ENCODE measurements at regions of chr20 and their contacts with region 1.

Region 1: DNA sequence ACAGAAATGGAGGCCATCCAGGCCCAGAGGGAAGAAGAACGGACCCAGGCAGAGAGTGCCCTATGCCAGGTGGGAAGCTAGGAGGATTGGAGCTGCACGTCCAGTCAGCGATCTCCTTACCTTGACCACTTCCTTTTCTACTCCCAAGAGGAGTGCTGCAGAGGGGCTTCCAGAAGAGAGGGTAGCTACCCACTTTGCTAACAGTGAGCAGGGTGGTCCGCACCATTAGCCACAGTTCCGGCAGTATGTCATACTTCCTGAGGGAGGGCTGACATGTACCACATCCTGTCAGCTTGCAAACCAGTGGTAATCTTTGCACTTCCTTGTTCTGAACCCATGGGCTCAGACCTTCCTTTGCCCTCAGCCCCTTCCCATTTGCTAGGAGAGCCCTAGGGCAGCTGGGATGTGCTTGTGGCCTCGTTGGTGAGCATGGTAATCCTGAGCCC is 35.4 kb downstream of the CEP250 start:
- DNase-seq: peak; percentile 70 to 84 (median 74)
- H3K4me3 ChIP-seq: peak overlapping the region; percentile 48 to 97
- H3K4me3 Mint-ChIP-seq: peak overlapping the region; percentile 95 to 99 (median 99)
- H3K27ac ChIP-seq: peak overlapping the region; percentile 87
- H3K27ac Mint-ChIP-seq: peak overlapping the region; percentile 94 to 100 (median 98)
- H3K4me1 ChIP-seq: peaks cover 55% of the 10 kb centered on the region
- H3K4me1 Mint-ChIP-seq: peaks cover 38 to 81% (median 56%) of the 10 kb centered on the region in 4 donors
- H3K27me3 ChIP-seq: no peaks in the 10 kb centered on the region
- H3K27me3 Mint-ChIP-seq: no peaks in the 10 kb centered on the region

Region 2: DNA sequence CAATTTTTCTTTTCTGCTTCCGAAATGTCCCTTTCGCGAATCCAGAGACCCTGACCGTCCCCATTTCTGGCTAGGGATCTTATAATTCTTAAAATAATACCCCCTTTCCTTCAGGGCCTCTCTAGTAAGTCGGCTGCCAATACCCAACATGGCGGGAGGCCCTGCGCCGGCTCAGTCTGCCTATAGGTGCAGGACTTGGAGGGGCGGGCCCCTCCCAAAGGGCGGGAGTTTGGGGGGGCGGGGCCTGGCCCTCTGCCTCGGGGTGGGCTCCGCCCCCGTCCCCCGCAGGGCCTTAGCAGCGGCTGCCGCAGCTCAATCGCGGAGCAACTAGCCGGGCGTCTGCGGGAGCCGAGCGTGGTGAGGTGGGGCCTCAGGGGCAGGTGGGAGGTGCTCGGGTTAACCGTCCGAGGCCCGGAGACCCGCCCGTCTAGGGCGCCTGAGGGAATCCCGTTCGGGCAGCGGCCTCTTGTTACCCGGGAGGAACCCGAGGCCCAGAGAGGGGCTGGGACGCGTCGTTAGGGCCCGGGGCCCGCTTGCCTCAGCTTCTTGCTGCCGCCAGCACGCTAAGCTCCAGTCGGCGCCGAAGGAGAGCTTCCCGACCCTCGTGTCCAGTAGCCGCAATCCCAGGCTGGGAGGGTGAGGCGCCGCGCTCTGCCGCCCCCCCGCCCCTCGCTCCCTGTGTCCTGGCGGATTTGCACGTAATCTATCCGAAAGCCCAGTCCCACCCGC is 35.7 kb before region 1 on chr20 and contains the start of gene CEP250:
- CTCF ChIA-PET with region 1: interaction called, 8 read pairs
- POLR2A ChIA-PET with region 1: interaction called, 30 read pairs
- intact Hi-C with region 1: loop called (anchors 2 kb)
- DNase-seq: peak; percentile 94 to 96 (median 96)
- H3K4me3 ChIP-seq: peak within 1 kb of the TSS; percentile 80 to 82
- H3K4me3 Mint-ChIP-seq: peak within 1 kb of the TSS; percentile 92 to 99 (median 97)
- H3K27ac ChIP-seq: peak within 1 kb of the TSS; percentile 95
- H3K27ac Mint-ChIP-seq: peak within 1 kb of the TSS; percentile 95 to 99 (median 98)
- H3K4me1 ChIP-seq: no peaks in the 10 kb centered on the region
- H3K4me1 Mint-ChIP-seq: peaks cover 7 to 29% (median 19%) of the 10 kb centered on the region in 4 donors
- H3K27me3 ChIP-seq: no peaks in the 10 kb centered on the region
- H3K27me3 Mint-ChIP-seq: no peaks in the 10 kb centered on the region
- total RNA-seq, gene CEP250: 71.3 to 76.9 TPM

Region 3: DNA sequence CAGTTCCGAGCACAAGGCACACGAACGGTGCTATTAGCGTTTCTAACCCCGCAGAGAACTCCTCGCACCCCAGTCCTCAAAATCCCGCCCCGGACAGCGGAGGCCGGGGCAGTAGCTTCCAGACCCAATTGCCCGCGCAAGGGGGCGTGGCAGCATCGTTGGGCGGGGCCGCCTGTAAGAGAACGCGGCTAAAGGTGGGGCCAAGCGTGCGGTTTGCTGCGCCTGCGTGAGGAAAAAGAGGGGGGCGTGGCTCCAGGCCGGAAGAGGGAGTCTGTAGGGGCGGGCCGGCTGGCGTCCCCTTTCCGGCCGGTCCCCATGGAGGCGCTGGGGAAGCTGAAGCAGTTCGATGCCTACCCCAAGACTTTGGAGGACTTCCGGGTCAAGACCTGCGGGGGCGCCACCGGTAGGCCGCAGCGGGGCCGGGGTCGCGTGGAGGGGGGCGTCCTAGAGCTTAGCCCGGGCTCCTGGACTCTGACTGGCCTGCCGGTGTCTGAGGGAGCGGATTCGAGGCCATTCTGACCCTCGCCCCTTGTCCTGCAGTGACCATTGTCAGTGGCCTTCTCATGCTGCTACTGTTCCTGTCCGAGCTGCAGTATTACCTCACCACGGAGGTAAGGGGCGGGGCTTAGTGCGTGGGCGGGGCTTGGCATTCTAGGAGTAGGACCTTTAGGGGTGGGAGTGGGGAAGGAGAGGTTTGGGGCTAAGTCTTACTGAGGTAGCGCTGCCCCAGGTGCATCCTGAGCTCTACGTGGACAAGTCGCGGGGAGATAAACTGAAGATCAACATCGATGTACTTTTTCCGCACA is 51.2 kb after region 1 on chr20 and contains the start of gene ERGIC3:
- CTCF ChIA-PET with region 1: no interaction called
- POLR2A ChIA-PET with region 1: interaction called, 19 read pairs
- intact Hi-C with region 1: loop called (anchors 2 kb)
- DNase-seq: peak; percentile 95 to 96 (median 95)
- H3K4me3 ChIP-seq: peak within 1 kb of the TSS; percentile 37 to 76
- H3K4me3 Mint-ChIP-seq: peak within 1 kb of the TSS; percentile 86 to 93 (median 90)
- H3K27ac ChIP-seq: peak within 1 kb of the TSS; percentile 78
- H3K27ac Mint-ChIP-seq: peak within 1 kb of the TSS; percentile 86 to 95 (median 92)
- H3K4me1 ChIP-seq: peaks cover 15% of the 10 kb centered on the region
- H3K4me1 Mint-ChIP-seq: peaks cover 11 to 28% (median 21%) of the 10 kb centered on the region in 4 donors
- H3K27me3 ChIP-seq: no peaks in the 10 kb centered on the region
- H3K27me3 Mint-ChIP-seq: no peaks in the 10 kb centered on the region
- total RNA-seq, gene ERGIC3: 148 to 151 TPM